BJ (cell line): ENCODE measurements at regions of chr2 and their contacts with region 1.

Region 1: GRCh38 chr2:121071034-121071504 is 213.9 kb downstream of the TFCP2L1 start:
- DNase-seq: no peak
- H3K4me3 ChIP-seq: no peak overlapping the region
- H3K27me3 ChIP-seq: peaks cover 2% of the 10 kb centered on the region; the same call in 1 of the 2 replicates
- CTCF ChIP-seq: peak; percentile 94

Region 2: GRCh38 chr2:120693121-120693520 is 377.9 kb before region 1 on chr2:
- CTCF ChIA-PET with region 1: interaction called, 446 read pairs
- POLR2A ChIA-PET with region 1: interaction called, 8 read pairs
- DNase-seq: no peak
- H3K4me3 ChIP-seq: no peak overlapping the region
- H3K27me3 ChIP-seq: peaks cover 4% of the 10 kb centered on the region; the same call in 1 of the 2 replicates
- CTCF ChIP-seq: no peak

Region 3: GRCh38 chr2:120699292-120699691 is 371.8 kb before region 1 on chr2:
- CTCF ChIA-PET with region 1: interaction called, 446 read pairs
- POLR2A ChIA-PET with region 1: interaction called, 8 read pairs
- DNase-seq: no peak
- H3K4me3 ChIP-seq: no peak overlapping the region
- H3K27me3 ChIP-seq: peaks cover 2% of the 10 kb centered on the region; the same call in 1 of the 2 replicates
- CTCF ChIP-seq: no peak

Region 4: GRCh38 chr2:120735746-120736170 is 335.3 kb before region 1 on chr2 and contains the start of gene GLI2:
- CTCF ChIA-PET with region 1: interaction called, 13 read pairs
- POLR2A ChIA-PET with region 1: no interaction called
- DNase-seq: no peak
- H3K4me3 ChIP-seq: peak within 1 kb of the TSS; percentile 87
- H3K27me3 ChIP-seq: no peaks in the 10 kb centered on the region
- CTCF ChIP-seq: peak; percentile 58
- polyA plus RNA-seq, gene GLI2: 5.1 and 8.1 TPM in 2 replicates

Region 5: DNA sequence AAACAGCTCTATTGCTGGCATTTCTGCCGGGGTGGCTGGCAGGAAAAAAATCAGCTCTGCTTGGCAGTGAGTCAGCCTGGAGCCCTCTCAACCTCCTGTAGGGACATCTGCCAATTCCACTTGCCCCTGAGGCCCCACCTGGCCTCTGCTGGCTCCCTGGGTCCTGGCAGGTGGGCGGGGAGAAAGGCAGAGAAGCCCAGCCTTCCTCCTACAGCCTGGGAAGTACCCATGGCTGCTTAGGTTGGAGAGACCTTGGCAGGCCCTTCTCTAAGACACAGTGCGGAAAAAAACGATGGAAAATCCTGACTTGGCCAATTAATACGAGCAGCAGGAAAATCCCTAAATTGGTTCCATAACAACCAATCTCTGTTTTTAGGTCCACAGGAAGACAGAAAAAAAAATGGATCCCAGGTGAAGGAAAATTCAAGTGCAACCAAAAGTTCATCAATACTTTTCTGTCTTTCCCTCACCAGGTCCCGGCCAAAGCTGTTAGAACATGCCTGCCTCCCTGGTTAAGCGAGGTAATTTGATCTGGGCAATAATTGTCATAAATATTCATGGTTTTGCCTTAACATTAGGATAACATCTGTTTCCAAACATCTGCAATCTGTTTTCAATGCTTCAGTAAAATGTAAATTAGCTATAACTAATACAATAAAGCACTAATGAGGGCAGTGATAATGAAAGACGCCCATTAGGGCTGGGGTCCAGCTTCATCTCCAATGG is 32.0 kb before region 1 on chr2:
- CTCF ChIA-PET with region 1: interaction called, 12 read pairs
- POLR2A ChIA-PET with region 1: no interaction called
- DNase-seq: no peak
- H3K4me3 ChIP-seq: no peak overlapping the region
- H3K27me3 ChIP-seq: peaks cover 25% of the 10 kb centered on the region
- CTCF ChIP-seq: no peak

Region 6: DNA sequence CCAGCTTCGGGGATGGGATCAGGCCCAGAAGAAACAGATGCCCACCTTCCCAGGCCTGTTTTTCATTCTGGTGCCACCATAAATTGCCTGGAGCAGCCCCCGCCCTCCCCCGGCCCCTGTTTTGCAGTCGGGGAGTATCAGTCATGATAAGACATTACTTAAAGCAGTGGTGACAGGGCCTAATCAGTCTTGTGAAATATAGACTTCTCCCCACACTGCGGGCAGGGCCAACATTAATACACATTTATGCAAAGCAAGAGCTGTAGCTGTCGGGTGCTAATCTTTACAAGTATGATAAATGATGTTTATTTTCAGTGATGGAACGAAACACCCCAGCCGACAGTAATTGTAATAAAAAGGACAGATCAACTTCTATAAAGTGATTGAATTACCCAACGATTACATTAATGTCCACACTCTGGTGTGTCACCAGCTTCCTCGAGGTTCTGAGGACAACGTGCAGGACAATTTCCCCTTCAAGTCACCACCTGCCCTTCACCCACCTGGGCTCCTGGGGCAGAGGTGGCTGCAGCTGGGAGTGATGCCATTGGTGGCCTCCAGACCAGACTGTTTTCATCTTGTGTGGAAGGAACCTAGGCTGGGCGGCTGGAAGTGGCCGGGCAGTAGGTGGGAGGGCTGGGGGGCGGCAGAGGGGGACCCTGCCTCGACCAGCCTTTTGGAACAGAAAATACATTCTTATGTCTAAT is 12.1 kb before region 1 on chr2:
- CTCF ChIA-PET with region 1: interaction called, 13 read pairs
- POLR2A ChIA-PET with region 1: no interaction called
- DNase-seq: no peak
- H3K4me3 ChIP-seq: no peak overlapping the region
- H3K27me3 ChIP-seq: peaks cover 5% of the 10 kb centered on the region; the same call in 1 of the 2 replicates
- CTCF ChIP-seq: no peak

Region 7: GRCh38 chr2:121110924-121111323 is 39.9 kb after region 1 on chr2:
- CTCF ChIA-PET with region 1: no interaction called
- POLR2A ChIA-PET with region 1: no interaction called
- DNase-seq: no peak
- H3K4me3 ChIP-seq: no peak overlapping the region
- H3K27me3 ChIP-seq: peaks cover 4% of the 10 kb centered on the region
- CTCF ChIP-seq: no peak

Region 8: GRCh38 chr2:121128754-121129659 is 57.9 kb after region 1 on chr2:
- CTCF ChIA-PET with region 1: no interaction called
- POLR2A ChIA-PET with region 1: no interaction called
- DNase-seq: no peak
- H3K4me3 ChIP-seq: no peak overlapping the region
- H3K27me3 ChIP-seq: peaks cover 6% of the 10 kb centered on the region
- CTCF ChIP-seq: peak; percentile 46